GM12878 (cell line): ENCODE measurements at regions of chr6 and their contacts with region 1.

Region 1: GRCh38 chr6:126696921-126697693 is 357.2 kb downstream of the CENPW start:
- DNase-seq: no peak
- ATAC-seq: no peak
- H3K4me3 ChIP-seq: no peak overlapping the region
- H3K27ac ChIP-seq: no peak overlapping the region
- H3K4me1 ChIP-seq: no peaks in the 10 kb centered on the region
- H3K27me3 ChIP-seq: no peaks in the 10 kb centered on the region
- CTCF ChIP-seq: no peak
- EP300 ChIP-seq: no peak
- POLR2A ChIP-seq: no peak
- RAD21 ChIP-seq: no peak

Region 2: GRCh38 chr6:126600258-126600916 is 96.7 kb before region 1 on chr6:
- CTCF ChIA-PET with region 1: no interaction called
- POLR2A ChIA-PET with region 1: no interaction called
- RAD21 ChIA-PET with region 1: no interaction called
- SMC1A ChIA-PET with region 1: no interaction called
- in situ Hi-C with region 1: no loop called
- intact Hi-C with region 1: no loop called
- DNase-seq: no peak
- ATAC-seq: no peak
- H3K4me3 ChIP-seq: no peak overlapping the region
- H3K27ac ChIP-seq: no peak overlapping the region
- H3K4me1 ChIP-seq: no peaks in the 10 kb centered on the region
- H3K27me3 ChIP-seq: no peaks in the 10 kb centered on the region
- CTCF ChIP-seq: no peak
- EP300 ChIP-seq: no peak
- POLR2A ChIP-seq: no peak
- RAD21 ChIP-seq: no peak

Region 3: GRCh38 chr6:126672649-126673048 is 24.5 kb before region 1 on chr6:
- CTCF ChIA-PET with region 1: no interaction called
- POLR2A ChIA-PET with region 1: no interaction called
- RAD21 ChIA-PET with region 1: no interaction called
- SMC1A ChIA-PET with region 1: interaction called, 10 read pairs
- in situ Hi-C with region 1: no loop called
- intact Hi-C with region 1: no loop called
- DNase-seq: no peak
- ATAC-seq: peak; percentile 88
- H3K4me3 ChIP-seq: no peak overlapping the region
- H3K27ac ChIP-seq: no peak overlapping the region
- H3K4me1 ChIP-seq: 0 out of 2 replicates have a peak, but pooled peaks cover 5% of the 10 kb centered on the region
- H3K27me3 ChIP-seq: no peaks in the 10 kb centered on the region
- CTCF ChIP-seq: no peak
- EP300 ChIP-seq: no peak
- POLR2A ChIP-seq: no peak
- RAD21 ChIP-seq: no peak